Activated CD8-positive, alpha-beta T cell treated with anti-CD3 and anti-CD28 coated beads for 36 hours (primary cell): ENCODE measurements at regions of chr17 and their contacts with region 1.

Region 1: GRCh38 chr17:50972577-50972976 is 106.4 kb upstream of the TOB1 start:
- DNase-seq: no peak
- ATAC-seq: no peak
- H3K4me3 Mint-ChIP-seq: no peak overlapping the region
- H3K27ac Mint-ChIP-seq: no peak overlapping the region
- H3K4me1 Mint-ChIP-seq: peaks cover 11% of the 10 kb centered on the region
- H3K27me3 Mint-ChIP-seq: no peaks in the 10 kb centered on the region
- CTCF ChIP-seq: no peak

Region 2: DNA sequence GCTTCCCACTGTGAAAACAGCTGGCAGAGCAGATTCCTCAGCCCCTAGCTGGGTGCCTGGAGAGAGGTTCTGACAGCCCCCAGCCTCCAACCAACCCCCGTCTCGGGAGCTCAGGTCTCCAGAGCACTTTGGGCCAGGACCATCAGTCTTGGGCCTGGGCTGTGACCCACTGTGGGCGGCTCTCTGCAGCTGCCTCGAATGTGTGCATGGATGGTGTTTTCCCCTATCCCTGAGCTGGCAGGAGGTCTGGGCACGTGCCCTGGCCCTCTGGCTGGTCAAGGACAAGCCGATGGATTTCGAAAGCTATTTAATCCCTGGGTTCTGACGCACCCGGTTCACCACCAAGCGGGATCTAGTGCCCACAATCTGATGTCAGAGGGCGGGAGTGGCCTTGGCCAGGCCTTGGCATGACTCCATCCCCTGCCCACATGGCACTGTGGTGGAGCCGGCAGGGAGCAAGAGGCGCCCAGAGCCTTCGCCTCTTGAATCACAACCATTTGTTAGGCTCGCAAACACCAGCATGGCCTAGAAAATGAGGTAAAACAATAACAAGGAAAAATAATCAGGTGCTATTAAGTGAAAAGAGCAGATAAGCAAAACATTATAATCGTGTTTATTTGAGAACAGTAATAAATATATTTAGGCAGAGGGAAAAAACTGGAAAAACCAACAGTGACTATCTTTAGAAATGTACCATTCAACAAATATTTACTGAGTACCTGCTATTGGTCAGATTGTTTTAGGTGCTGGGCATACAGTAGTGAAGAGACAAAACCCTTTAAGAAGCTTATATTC is 37.2 kb before region 1 on chr17:
- CTCF ChIA-PET with region 1: no interaction called
- POLR2A ChIA-PET with region 1: no interaction called
- intact Hi-C with region 1: no loop called
- DNase-seq: no peak
- ATAC-seq: no peak
- H3K4me3 Mint-ChIP-seq: no peak overlapping the region
- H3K27ac Mint-ChIP-seq: no peak overlapping the region
- H3K4me1 Mint-ChIP-seq: peaks cover 10% of the 10 kb centered on the region
- H3K27me3 Mint-ChIP-seq: no peaks in the 10 kb centered on the region
- CTCF ChIP-seq: no peak

Region 3: DNA sequence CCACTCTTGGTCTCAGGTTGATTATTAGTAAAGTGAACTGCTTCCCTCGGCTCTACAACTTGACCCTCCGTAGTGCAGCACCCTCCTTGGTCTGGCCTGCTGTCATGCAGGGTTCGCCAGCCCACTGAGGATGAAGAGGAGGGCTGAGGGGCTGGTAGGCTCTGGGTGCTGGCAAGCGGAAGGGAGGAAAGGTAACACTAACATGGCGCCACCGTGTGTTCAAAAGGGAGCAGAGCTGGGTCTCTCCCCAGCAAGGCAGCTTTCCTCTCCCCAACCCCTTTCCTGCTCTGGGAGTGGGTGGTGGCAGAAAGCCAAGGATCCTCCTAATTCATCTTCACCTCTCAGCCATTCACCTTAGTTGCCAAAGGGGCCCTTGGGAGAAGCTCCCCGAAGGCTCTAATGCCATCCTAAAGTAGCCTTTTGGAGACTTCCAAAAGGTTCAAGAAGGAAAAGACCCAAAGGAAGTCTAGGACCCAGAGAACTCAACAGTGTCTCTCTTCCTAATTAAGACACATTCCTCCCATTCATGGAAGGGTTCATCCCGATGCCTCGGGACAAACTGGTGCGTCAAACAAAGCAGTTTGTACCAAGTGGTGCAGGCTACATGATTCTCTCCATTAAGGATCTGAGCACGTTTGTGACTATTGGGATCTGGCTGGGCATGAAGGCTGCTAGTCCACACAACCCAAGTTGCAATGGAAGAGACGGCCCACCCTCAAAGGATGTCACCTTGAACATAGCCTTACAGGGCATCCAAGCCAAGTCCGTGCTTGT is 15.6 kb before region 1 on chr17:
- CTCF ChIA-PET with region 1: interaction called, 14 read pairs
- POLR2A ChIA-PET with region 1: no interaction called
- intact Hi-C with region 1: no loop called
- DNase-seq: peak; percentile 76
- ATAC-seq: peak; percentile 94
- H3K4me3 Mint-ChIP-seq: no peak overlapping the region
- H3K27ac Mint-ChIP-seq: no peak overlapping the region
- H3K4me1 Mint-ChIP-seq: peaks cover 2% of the 10 kb centered on the region
- H3K27me3 Mint-ChIP-seq: no peaks in the 10 kb centered on the region
- CTCF ChIP-seq: peak; percentile 79